ENCODE measurements at regions of chr13 and their contacts with region 1.

Region 1: GRCh38 chr13:50676602-50677001 is 166.9 kb downstream of the DLEU7 start:
- DNase-seq: no peak

Region 2: GRCh38 chr13:50594276-50595051 is 82.1 kb before region 1 on chr13:
- intact Hi-C with region 1: loop called (anchors 5 kb)
- DNase-seq: no peak

Region 3: GRCh38 chr13:50731400-50731799 is 54.8 kb after region 1 on chr13:
- intact Hi-C with region 1: loop called (anchors 5 kb)
- DNase-seq: no peak